AG04450 (cell line): ENCODE measurements at regions of chr1 and their contacts with region 1.

Region 1: DNA sequence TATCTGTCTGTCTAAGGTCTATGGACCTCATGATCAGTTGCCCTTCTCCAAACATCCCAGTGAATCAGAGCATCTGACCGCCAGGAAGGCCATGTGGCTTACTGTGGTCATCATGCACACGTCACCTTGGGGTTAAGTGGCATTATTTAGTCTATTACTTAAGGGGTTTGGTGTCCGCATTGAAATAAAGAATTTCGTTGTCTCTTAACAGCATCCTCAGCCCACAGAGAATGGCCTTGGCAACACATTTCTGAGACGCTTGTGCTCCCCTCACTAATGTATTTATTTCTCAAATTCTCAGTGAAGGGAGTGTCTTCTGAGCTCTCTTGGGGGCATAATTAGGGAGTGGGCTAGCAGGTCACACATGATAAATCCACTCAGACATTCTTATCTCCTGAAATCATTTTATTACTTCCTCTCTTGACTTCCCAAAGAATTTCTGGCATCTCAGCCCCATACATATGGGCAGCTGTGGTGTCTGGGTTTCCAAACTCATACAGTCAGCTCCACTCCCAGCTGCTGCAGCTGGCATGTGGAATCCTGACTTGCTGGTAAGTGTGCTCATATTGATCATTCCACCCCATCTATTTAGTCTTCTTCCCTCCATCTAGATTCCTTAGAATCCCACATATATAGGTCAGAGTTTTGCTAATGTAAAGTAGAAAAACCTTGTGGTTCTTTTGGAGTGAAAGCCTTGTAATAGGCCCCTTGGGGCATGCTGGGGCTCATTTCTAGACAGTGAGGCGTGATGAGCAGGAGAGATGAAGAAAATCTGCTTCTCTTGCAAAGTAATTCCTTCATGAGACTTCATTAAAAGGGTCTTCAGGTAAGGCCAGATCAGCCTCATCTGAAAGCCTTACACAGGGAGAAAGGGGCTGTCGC is 110.5 kb downstream of the HHAT start:
- DNase-seq: peak; percentile 94
- H3K4me3 ChIP-seq: no peak overlapping the region
- H3K27ac ChIP-seq: peak overlapping the region; percentile 92
- H3K27me3 ChIP-seq: no peaks in the 10 kb centered on the region
- CTCF ChIP-seq: no peak

Region 2: GRCh38 chr1:211037095-211037494 is 597.9 kb after region 1 on chr1:
- CTCF ChIA-PET with region 1: no interaction called
- POLR2A ChIA-PET with region 1: interaction called, 10 read pairs
- DNase-seq: peak; percentile 51
- H3K4me3 ChIP-seq: no peak overlapping the region
- H3K27ac ChIP-seq: peak overlapping the region; percentile 80
- H3K27me3 ChIP-seq: no peaks in the 10 kb centered on the region
- CTCF ChIP-seq: no peak